ENCODE measurements at regions of chr1 and their contacts with region 1.

Region 1: DNA sequence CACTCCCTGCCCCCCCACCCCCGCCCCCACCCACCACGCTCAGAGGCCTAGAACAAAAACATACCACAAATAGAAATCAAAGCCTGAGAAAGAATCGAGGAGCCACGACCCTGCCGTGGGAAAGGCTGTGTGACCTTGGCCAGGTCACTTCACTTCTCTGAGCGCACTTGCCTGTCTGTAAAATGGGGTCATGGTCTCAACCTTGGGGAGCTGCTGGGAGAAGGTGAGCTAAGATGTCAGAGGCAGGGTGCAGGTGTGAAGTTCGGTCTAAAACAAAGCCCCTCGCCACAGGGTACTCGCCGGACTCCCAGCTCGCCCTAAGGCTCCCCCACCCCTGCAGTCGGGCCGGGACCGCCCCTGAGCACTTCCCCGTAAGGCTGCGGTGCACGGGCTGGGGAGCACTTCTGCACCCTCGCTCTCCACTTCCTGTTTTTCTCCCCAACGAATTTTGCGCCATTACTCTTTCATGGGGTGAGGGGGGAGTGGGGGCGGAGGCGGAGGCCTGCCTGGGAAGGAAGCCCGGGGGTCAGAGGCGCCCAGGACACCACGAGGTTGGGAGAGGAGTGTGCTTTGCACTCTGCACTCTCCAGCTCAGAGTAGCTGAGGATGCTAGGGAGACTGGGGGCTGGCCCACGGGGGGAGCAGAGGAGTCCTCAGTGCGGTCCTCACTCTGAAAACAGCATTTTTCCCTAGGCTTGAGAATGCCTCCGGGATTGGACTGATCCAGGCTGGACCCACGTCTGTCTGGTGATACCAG is 21.9 kb upstream of the PIK3CD start:
- DNase-seq: peak; percentile 59 to 89 (median 75)
- H3K4me3 ChIP-seq: peak overlapping the region; percentile 94
- H3K4me3 Mint-ChIP-seq: peak overlapping the region; percentile 89 to 98 (median 97)
- H3K27ac ChIP-seq: peak overlapping the region; percentile 76
- H3K27ac Mint-ChIP-seq: peak overlapping the region; percentile 87 to 98 (median 93)
- H3K4me1 ChIP-seq: peaks cover 59% of the 10 kb centered on the region
- H3K4me1 Mint-ChIP-seq: peaks cover 46 to 81% (median 71%) of the 10 kb centered on the region in 3 donors
- H3K27me3 ChIP-seq: no peaks in the 10 kb centered on the region
- H3K27me3 Mint-ChIP-seq: no peaks in the 10 kb centered on the region

Region 2: GRCh38 chr1:9225468-9225785 is 404.2 kb before region 1 on chr1:
- CTCF ChIA-PET with region 1: no interaction called
- POLR2A ChIA-PET with region 1: no interaction called
- DNase-seq: no peak
- H3K4me3 ChIP-seq: no peak overlapping the region
- H3K4me3 Mint-ChIP-seq: no peak overlapping the region
- H3K27ac ChIP-seq: no peak overlapping the region
- H3K27ac Mint-ChIP-seq: peak overlapping the region in 2 of 8 donors; percentile 46 to 70
- H3K4me1 ChIP-seq: no peaks in the 10 kb centered on the region
- H3K4me1 Mint-ChIP-seq: no peaks in the 10 kb centered on the region
- H3K27me3 ChIP-seq: no peaks in the 10 kb centered on the region
- H3K27me3 Mint-ChIP-seq: peaks cover 5 to 7% of the 10 kb centered on the region in 2 donors

Region 3: GRCh38 chr1:9615316-9616063 is 14.1 kb before region 1 on chr1:
- CTCF ChIA-PET with region 1: interaction called, 13 read pairs
- POLR2A ChIA-PET with region 1: no interaction called
- DNase-seq: peak; percentile 22 to 65 (median 33)
- H3K4me3 ChIP-seq: no peak overlapping the region
- H3K4me3 Mint-ChIP-seq: no peak overlapping the region
- H3K27ac ChIP-seq: no peak overlapping the region
- H3K27ac Mint-ChIP-seq: no peak overlapping the region
- H3K4me1 ChIP-seq: no peaks in the 10 kb centered on the region
- H3K4me1 Mint-ChIP-seq: no peaks in the 10 kb centered on the region
- H3K27me3 ChIP-seq: no peaks in the 10 kb centered on the region
- H3K27me3 Mint-ChIP-seq: peaks cover 6% of the 10 kb centered on the region in 2 donors

Region 4: DNA sequence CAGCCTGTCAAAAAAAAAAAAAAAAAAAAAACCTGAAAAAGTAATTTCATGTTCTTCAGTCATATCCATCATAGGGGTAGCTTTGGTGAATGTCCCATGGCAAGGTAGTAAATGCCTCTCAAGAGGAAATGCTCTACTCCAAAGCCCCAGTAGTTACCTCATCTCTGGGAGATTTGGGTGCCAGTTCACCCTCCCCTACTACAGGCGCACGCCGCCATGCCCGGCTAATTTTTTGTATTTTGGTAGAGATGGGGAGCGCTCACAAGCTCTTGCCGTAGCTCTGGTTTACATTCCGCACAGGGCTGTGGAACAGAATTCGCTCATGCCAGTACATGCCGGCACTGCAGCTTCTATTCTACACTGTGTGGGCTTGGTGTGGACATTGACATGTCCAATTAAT is 35.6 kb after region 1 on chr1:
- CTCF ChIA-PET with region 1: interaction called, 16 read pairs
- POLR2A ChIA-PET with region 1: no interaction called
- DNase-seq: no peak
- H3K4me3 ChIP-seq: no peak overlapping the region
- H3K4me3 Mint-ChIP-seq: peak overlapping the region in 1 of 7 donors; percentile 34
- H3K27ac ChIP-seq: no peak overlapping the region
- H3K27ac Mint-ChIP-seq: peak overlapping the region; percentile 39 to 85 (median 68)
- H3K4me1 ChIP-seq: peaks cover 33% of the 10 kb centered on the region
- H3K4me1 Mint-ChIP-seq: peaks cover 46 to 74% (median 61%) of the 10 kb centered on the region in 3 donors
- H3K27me3 ChIP-seq: no peaks in the 10 kb centered on the region
- H3K27me3 Mint-ChIP-seq: no peaks in the 10 kb centered on the region

Region 5: DNA sequence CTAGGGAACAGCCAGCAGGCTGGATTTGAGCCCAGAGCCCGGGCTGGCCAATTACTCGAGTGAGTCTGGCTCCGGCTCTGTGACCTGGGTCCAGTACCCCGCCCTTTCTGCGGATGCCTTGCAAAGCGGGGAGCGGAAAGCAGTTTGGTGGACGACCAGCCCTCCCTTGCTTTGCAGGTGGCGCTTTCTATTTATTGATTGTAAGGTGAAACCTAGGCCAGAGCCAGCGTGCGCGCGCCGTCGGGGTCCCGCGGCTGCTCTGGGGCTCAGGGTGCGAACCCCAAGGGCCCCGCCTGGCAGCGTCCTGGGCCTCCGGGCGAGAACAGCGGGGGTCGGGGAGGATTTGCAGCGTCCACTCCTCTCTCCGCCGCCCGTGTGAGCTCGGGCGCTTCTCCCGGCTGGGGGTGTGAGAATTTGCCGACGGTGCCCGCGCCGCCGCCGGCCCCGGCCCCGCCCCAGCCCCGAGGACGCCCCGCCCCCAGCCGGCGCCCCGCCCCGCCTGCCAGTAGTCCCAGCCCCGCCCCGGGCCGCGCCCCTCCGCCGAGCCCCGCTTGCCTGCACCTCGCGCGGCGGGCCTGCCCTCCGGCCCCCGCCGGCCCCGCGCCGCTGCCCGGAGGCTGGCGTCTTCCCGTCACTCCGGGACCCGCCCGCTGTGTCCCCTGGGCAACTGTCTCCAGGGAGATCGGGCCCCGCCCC is 59.5 kb after region 1 on chr1:
- CTCF ChIA-PET with region 1: interaction called, 86 read pairs
- POLR2A ChIA-PET with region 1: interaction called, 12 read pairs
- DNase-seq: peak; percentile 77 to 88 (median 80)
- H3K4me3 ChIP-seq: peak overlapping the region; percentile 81
- H3K4me3 Mint-ChIP-seq: peak overlapping the region; percentile 77 to 92 (median 82)
- H3K27ac ChIP-seq: peak overlapping the region; percentile 51
- H3K27ac Mint-ChIP-seq: peak overlapping the region in 6 of 8 donors; percentile 42 to 95 (median 88)
- H3K4me1 ChIP-seq: peaks cover 64% of the 10 kb centered on the region
- H3K4me1 Mint-ChIP-seq: peaks cover 61 to 80% (median 76%) of the 10 kb centered on the region in 3 donors
- H3K27me3 ChIP-seq: no peaks in the 10 kb centered on the region
- H3K27me3 Mint-ChIP-seq: no peaks in the 10 kb centered on the region

Region 6: GRCh38 chr1:9717193-9718005 is 87.8 kb after region 1 on chr1:
- CTCF ChIA-PET with region 1: interaction called, 280 read pairs
- POLR2A ChIA-PET with region 1: interaction called, 36 read pairs
- DNase-seq: peak; percentile 80 to 95 (median 91)
- H3K4me3 ChIP-seq: peak overlapping the region; percentile 89
- H3K4me3 Mint-ChIP-seq: peak overlapping the region; percentile 90 to 98 (median 95)
- H3K27ac ChIP-seq: peak overlapping the region; percentile 81
- H3K27ac Mint-ChIP-seq: peak overlapping the region; percentile 88 to 98 (median 94)
- H3K4me1 ChIP-seq: peaks cover 92% of the 10 kb centered on the region
- H3K4me1 Mint-ChIP-seq: peaks cover 37 to 79% (median 43%) of the 10 kb centered on the region in 3 donors
- H3K27me3 ChIP-seq: no peaks in the 10 kb centered on the region
- H3K27me3 Mint-ChIP-seq: peaks cover 0 to 3% of the 10 kb centered on the region in 2 donors

Region 7: GRCh38 chr1:9867408-9868243 is 238.0 kb after region 1 on chr1:
- CTCF ChIA-PET with region 1: interaction called, 12 read pairs
- POLR2A ChIA-PET with region 1: interaction called, 3 read pairs
- DNase-seq: peak; percentile 72 to 90 (median 81)
- H3K4me3 ChIP-seq: no peak overlapping the region
- H3K4me3 Mint-ChIP-seq: no peak overlapping the region
- H3K27ac ChIP-seq: no peak overlapping the region
- H3K27ac Mint-ChIP-seq: no peak overlapping the region
- H3K4me1 ChIP-seq: no peaks in the 10 kb centered on the region
- H3K4me1 Mint-ChIP-seq: peaks cover 3 to 5% (median 3%) of the 10 kb centered on the region in 3 donors
- H3K27me3 ChIP-seq: no peaks in the 10 kb centered on the region
- H3K27me3 Mint-ChIP-seq: no peaks in the 10 kb centered on the region